Panc1 (cell line): ENCODE measurements at regions of chr16 and their contacts with region 1.

Region 1: DNA sequence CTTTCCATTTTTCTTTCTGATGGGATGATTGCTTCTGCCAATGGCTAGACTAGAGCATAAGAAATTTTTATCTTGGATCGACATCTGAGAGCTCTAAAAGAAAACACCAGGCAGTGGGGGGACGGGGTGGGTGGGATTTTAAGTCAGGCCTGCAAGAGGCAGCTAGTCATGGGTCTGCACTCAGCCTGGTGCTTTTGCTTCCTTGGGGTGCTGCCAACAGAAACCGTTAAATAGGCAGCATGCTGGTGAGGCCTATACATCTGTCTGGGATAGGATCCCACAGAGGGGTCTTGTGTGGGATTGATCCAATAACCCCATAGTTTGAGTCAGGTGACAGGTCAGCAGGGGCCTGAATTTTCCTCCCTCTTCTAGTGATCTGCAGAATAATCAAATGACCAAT is 26.9 kb downstream of the ZNRF1 start:
- DNase-seq: no peak
- ATAC-seq: peak; percentile 76
- H3K4me3 ChIP-seq: peak overlapping the region in 1 of 2 experiments; percentile 23; a peak in 1 of 4 replicates
- H3K27ac ChIP-seq: peak overlapping the region; percentile 90
- H3K4me1 ChIP-seq: peaks cover 40% of the 10 kb centered on the region
- H3K27me3 ChIP-seq: no peaks in the 10 kb centered on the region
- CTCF ChIP-seq: no peak

Region 2: DNA sequence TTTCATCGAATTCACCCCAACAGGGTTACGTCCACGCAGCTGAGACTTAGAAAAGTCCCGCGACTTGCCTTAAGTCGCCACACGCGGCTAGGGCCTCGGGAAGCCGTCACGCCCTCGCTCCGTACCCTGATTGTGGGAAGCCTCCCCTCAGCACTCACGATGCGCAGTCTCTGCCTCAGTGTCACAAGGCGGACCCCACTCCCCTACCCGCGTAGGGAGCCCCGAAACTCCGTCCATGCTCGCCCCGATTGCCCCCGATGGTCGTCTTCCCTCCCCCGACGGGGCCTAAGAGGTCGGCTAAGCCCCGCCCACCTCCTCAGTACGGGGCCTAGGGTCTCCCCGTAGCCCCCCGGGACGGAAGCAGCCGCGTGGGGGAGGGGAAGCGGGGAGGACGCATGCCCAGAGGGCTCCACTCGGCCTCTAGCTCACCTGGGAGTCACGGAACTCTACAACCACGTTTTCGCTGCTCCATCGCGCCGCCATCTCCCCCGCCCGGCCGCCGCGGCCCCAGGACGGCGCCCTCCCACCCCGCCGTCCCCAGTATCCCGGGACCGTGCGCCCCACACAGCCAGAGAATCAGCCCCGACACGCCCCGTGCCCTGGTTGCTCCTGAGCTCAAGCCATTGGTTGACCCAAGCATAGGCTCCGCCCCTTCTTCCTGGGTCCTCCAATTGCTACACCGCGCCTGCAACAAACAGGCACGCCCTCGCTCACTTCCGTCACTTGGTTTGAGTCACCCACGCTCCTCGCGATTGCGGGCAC is 41.0 kb before region 1 on chr16 and contains the start of gene WDR59:
- CTCF ChIA-PET with region 1: interaction called, 17 read pairs
- POLR2A ChIA-PET with region 1: no interaction called
- in situ Hi-C with region 1: no loop called
- intact Hi-C with region 1: no loop called
- DNase-seq: peak; percentile 94
- ATAC-seq: peak; percentile 100
- H3K4me3 ChIP-seq: peak within 1 kb of the TSS; percentile 88 to 93
- H3K27ac ChIP-seq: peak within 1 kb of the TSS; percentile 79
- H3K4me1 ChIP-seq: no peaks in the 10 kb centered on the region
- H3K27me3 ChIP-seq: no peaks in the 10 kb centered on the region
- CTCF ChIP-seq: no peak
- total RNA-seq, gene WDR59: 58.7 TPM

Region 3: GRCh38 chr16:75105306-75106061 is 79.7 kb after region 1 on chr16:
- CTCF ChIA-PET with region 1: no interaction called
- POLR2A ChIA-PET with region 1: no interaction called
- in situ Hi-C with region 1: no loop called
- intact Hi-C with region 1: no loop called
- DNase-seq: no peak
- ATAC-seq: no peak
- H3K4me3 ChIP-seq: no peak overlapping the region
- H3K27ac ChIP-seq: no peak overlapping the region; the same call in 1 of the 2 replicates
- H3K4me1 ChIP-seq: peaks cover 36% of the 10 kb centered on the region
- H3K27me3 ChIP-seq: no peaks in the 10 kb centered on the region
- CTCF ChIP-seq: no peak